T-cell (primary cell): ENCODE measurements at regions of chr1 and their contacts with region 1.

Region 1: DNA sequence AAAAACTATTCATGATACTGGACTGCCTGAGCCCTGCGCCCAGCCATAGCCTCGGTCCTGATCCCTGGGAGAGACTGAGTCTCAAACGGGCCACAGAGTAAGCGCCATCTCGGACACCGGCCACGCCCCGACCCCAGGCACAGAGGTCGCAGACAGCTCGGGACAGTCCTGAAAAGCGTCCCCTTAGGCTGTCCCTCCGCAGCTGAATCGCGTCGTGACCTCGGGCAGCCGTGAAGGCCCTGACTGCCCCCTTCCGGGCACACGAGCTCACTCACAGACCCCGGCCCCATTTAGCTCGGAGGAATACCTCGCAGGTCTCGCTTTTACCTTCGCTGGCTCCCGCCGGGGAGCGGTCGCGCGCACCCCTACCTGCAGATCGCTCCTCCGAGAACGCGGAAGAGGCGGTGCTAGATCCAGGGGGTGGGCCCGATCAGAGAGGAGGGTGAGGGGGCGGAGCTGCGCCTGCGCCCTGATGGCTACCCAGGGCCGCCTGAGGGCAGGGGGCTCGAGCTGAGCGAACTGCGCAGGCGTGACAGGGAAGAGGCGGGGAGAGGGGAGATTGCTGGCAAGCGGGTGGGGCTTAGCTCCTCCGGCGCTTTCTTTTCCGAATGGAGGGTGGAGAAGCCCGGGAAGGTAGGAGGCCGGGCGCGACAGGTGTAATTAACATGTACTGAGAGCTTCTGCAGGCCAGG is at the start of gene MKNK1:
- DNase-seq: peak; percentile 94 to 100 (median 98)
- ATAC-seq: peak; percentile 96 to 99 (median 96)
- H3K4me3 ChIP-seq: peak within 1 kb of the TSS; percentile 83 to 93
- H3K4me3 Mint-ChIP-seq: peak within 1 kb of the TSS; percentile 90 to 93 (median 92)
- H3K27ac ChIP-seq: peak within 1 kb of the TSS; percentile 60
- H3K27ac Mint-ChIP-seq: peak within 1 kb of the TSS; percentile 87 to 95
- H3K4me1 ChIP-seq: peaks cover 12 to 41% of the 10 kb centered on the region in 2 experiments
- H3K4me1 Mint-ChIP-seq: peaks cover 63 to 72% (median 67%) of the 10 kb centered on the region in 3 donors
- H3K27me3 ChIP-seq: no peaks in the 10 kb centered on the region
- H3K27me3 Mint-ChIP-seq: no peaks in the 10 kb centered on the region
- total RNA-seq, gene MKNK1: 41.4 to 54.5 (median 52.7) TPM

Region 2: DNA sequence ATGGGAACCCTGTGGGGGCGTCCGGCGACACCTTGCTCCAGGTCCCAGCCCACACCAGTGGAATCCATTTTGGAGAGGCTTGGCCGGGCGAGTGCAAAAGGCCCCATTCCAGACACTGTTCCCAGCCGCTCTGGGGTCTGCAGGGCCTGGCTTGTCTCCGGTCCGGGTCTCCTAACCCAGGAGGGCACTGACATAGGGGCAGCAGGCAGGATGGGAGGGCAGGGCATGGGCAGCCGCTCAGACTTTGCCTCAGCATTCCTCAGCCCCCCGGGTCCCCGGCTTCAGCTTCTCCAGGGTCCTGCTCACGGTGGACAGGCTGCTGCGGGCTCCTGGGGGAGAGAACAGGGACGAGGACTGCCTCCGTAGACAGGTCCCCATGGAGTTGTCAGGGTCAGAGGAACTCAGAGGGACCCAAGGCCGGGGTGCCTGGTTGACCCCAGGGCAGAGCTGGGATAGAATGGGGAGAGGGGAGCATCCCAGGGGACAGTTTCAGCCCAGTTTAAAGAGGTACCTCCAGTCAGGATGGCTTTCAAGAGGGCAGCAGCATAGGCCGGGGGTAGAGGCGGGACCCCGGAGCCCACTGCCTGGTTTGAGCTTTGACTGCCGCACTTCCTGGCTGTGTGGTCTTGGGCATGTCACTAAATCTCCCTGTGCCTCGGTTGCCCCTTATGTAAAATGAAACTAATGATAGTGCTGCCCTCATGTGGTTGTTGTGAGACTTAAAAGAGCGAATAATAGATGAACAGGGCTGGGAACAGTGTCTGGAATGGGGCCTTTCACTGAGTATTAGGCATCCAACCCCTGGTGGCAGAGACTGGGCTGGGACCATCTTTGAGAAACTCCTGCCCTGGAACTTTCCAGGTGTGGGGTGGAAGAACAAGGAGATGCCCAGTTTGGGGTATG is 56.3 kb before region 1 on chr1:
- CTCF ChIA-PET with region 1: no interaction called
- POLR2A ChIA-PET with region 1: no interaction called
- DNase-seq: peak in 1 of 35 experiments; percentile 60
- ATAC-seq: peak in 2 of 4 experiments; percentile 22 to 41
- H3K4me3 ChIP-seq: no peak overlapping the region
- H3K4me3 Mint-ChIP-seq: no peak overlapping the region
- H3K27ac ChIP-seq: no peak overlapping the region
- H3K27ac Mint-ChIP-seq: no peak overlapping the region
- H3K4me1 ChIP-seq: peaks cover 0 to 26% of the 10 kb centered on the region in 2 experiments
- H3K4me1 Mint-ChIP-seq: peaks cover 12 to 16% (median 15%) of the 10 kb centered on the region in 3 donors
- H3K27me3 ChIP-seq: peaks cover 14 to 71% of the 10 kb centered on the region in 2 experiments
- H3K27me3 Mint-ChIP-seq: peaks cover 34 to 40% of the 10 kb centered on the region in 2 donors

Region 3: GRCh38 chr1:46616277-46617107 is 12.5 kb after region 1 on chr1 and contains the start of gene MOB3C:
- CTCF ChIA-PET with region 1: interaction called, 7 to 11 read pairs
- POLR2A ChIA-PET with region 1: interaction called, 4 read pairs
- DNase-seq: peak; percentile 28 to 73 (median 56)
- ATAC-seq: peak; percentile 82 to 85 (median 84)
- H3K4me3 ChIP-seq: peak within 1 kb of the TSS; percentile 90 to 96
- H3K4me3 Mint-ChIP-seq: peak within 1 kb of the TSS; percentile 91 to 93 (median 92)
- H3K27ac ChIP-seq: peak within 1 kb of the TSS; percentile 71
- H3K27ac Mint-ChIP-seq: peak within 1 kb of the TSS; percentile 89 to 97
- H3K4me1 ChIP-seq: peaks cover 18 to 56% of the 10 kb centered on the region in 2 experiments
- H3K4me1 Mint-ChIP-seq: peaks cover 41 to 53% (median 48%) of the 10 kb centered on the region in 3 donors
- H3K27me3 ChIP-seq: no peaks in the 10 kb centered on the region
- H3K27me3 Mint-ChIP-seq: no peaks in the 10 kb centered on the region
- total RNA-seq, gene MOB3C: 13.2 to 29.6 (median 24.6) TPM